Posterior vena cava (tissue), 2 donors: ENCODE measurements at regions of chr6 and their contacts with region 1.

Region 1: DNA sequence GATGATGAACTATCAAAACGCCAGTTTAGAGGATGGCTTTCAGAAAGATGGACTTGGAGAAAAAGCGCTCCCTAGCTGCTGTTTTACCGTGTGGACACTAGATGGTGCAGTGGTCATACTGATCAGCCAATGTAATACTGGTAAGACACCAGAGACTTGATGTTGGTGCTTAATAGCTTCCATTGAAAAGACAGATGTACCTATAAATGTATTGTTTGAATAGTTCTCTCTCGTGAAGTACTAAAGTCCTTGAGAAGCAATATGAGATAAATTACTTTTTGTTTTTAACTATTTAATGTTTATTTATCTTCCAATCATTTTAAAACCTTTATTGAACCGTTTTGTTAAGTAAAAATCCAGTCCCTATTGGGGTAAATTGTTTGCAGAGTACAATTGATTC is 63.9 kb upstream of the FUCA2 start:
- DNase-seq: no peak

Region 2: GRCh38 chr6:143556529-143556928 is 18.9 kb before region 1 on chr6:
- intact Hi-C with region 1: no loop called
- DNase-seq: no peak

Region 3: GRCh38 chr6:143677891-143678791 is 102.7 kb after region 1 on chr6 and contains the start of gene PHACTR2:
- intact Hi-C with region 1: loop called in 1 of 2 experiments (anchors 10 kb)
- DNase-seq: peak; percentile 91
- total RNA-seq, gene PHACTR2: 53.8 to 72.6 TPM

Region 4: DNA sequence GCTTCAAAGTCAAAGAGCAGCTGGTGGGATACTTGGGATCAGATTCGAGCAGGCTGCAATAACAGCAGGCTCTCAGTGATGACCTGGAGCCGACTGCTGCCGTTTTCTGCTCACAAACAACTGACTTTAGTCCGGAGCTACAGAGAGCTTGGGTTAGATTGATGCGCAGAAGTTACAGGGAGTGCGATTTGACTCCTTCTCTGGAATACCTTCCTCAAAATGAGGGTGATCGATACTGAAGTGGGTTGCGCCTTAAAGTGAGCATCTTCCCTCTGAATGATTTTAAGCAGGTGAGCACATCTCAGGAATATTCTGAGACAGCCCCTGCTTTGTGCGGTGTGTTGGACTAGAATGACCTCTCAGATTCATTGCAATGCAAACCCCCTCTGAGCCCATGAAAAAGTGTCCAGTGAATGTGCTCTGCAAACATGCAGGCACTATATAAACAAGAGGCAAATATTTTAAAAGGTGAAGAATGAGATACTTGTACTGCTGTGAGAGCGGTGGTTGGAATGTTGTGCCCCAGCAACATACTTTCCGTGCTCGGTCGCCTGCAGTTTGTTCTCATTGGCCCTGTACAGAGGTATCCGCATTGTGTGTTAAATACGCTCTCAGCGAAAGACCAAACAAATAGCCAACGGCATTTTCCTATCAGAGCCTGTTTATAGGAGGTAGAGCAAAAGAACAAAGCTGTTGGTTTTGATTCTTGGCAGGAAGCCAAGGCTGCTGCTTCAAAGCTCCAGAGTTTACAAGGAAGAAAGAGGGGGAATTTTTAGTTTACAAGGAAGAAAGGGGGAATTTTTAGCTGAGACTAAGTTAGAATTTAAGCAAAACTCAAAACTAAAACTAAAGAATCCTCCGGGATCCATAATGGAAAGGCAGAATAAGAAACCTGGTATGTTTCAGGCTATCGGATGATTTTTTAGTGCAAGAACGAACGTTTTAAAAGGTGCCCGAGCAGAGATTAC is 170.0 kb after region 1 on chr6:
- intact Hi-C with region 1: loop called in 1 of 2 experiments (anchors 10 kb)
- DNase-seq: no peak

Region 5: GRCh38 chr6:143842902-143843676 is 267.6 kb after region 1 on chr6 and contains the start of gene LTV1:
- intact Hi-C with region 1: loop called in 1 of 2 experiments (anchors 10 kb)
- DNase-seq: peak; percentile 99
- total RNA-seq, gene LTV1: 16.8 to 20.8 TPM

Region 6: DNA sequence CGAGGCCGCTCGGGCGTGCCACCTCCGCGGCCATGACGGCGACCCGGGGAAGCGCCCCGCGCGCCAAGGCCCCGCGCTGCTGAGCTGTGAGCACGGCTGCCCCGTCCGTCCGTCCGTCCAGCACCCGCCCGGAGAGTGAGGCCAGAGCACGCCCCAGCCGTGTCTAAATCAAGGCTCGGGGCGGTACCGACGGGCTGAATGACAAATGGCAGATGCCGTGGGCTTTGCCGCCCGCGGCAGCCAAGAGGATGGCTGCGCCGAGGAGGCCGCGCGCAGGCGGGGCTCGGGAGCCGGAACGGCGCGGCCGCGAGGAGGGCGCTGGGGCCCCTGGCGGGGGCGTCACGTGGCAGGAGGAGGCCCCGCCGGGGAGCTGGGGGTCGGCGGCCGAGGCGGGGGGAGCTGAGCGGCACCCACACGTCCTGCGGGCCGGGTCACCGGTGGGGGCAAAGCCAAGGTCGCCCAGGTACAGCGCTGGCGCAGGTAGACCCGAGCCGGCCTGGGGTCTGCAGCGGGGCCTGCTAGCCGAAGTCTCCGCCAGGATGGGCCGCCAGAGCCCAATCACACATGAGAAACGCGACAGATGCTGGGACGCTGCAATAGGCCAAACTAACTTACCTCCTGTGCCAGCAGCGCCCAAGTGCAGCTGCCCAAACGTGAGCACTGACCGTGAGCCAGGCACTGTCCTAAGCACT is 432.8 kb after region 1 on chr6 and contains the start of gene PLAGL1:
- intact Hi-C with region 1: loop called (anchors 5 kb)
- DNase-seq: peak; percentile 91
- total RNA-seq, gene PLAGL1: 27.3 to 33.2 TPM

Region 7: GRCh38 chr6:144013486-144013909 is 438.1 kb after region 1 on chr6:
- intact Hi-C with region 1: loop called (anchors 5 kb)
- DNase-seq: peak; percentile 93